ENCODE measurements at regions of chr18 and their contacts with region 1.

Region 1: GRCh38 chr18:74147779-74148542 is at the starts of genes FBXO15 and TIMM21:
- DNase-seq: peak; percentile 90
- ATAC-seq: peak; percentile 95
- H3K4me3 ChIP-seq: peak within 1 kb of the TSS; percentile 85 to 96
- H3K27ac ChIP-seq: peak within 1 kb of the TSS; percentile 86
- H3K4me1 ChIP-seq: peaks cover 6 to 23% of the 10 kb centered on the region in 2 experiments; a peak in 3 of 4 replicates
- H3K27me3 ChIP-seq: peaks cover 8% of the 10 kb centered on the region; the same call in 1 of the 2 replicates
- CTCF ChIP-seq: no peak
- POLR2A ChIP-seq: peak; percentile 80
- RAD21 ChIP-seq: no peak
- total RNA-seq, gene FBXO15: 1.1 TPM
- total RNA-seq, gene TIMM21: 33.3 TPM

Region 2: GRCh38 chr18:74291771-74292540 is 144.0 kb after region 1 on chr18 and contains the start of gene CYB5A:
- CTCF ChIA-PET with region 1: no interaction called
- POLR2A ChIA-PET with region 1: no interaction called
- RAD21 ChIA-PET with region 1: no interaction called
- intact Hi-C with region 1: loop called (anchors 2 kb)
- DNase-seq: peak; percentile 83
- ATAC-seq: peak; percentile 96
- H3K4me3 ChIP-seq: peak within 1 kb of the TSS; percentile 62 to 75
- H3K27ac ChIP-seq: peak within 1 kb of the TSS; percentile 20; the same call in 1 of the 2 replicates
- H3K4me1 ChIP-seq: peaks cover 7 to 19% of the 10 kb centered on the region in 2 experiments; a peak in 3 of 4 replicates
- H3K27me3 ChIP-seq: no peaks in the 10 kb centered on the region
- CTCF ChIP-seq: 0 out of 6 replicates have a peak, but pooled peaks of 1 of the 3 experiments have one; percentile 7
- POLR2A ChIP-seq: no peak
- RAD21 ChIP-seq: no peak
- total RNA-seq, gene CYB5A: 37.7 TPM

Region 3: GRCh38 chr18:74597662-74598349 is 449.8 kb after region 1 on chr18 and contains the start of gene ZNF407:
- CTCF ChIA-PET with region 1: no interaction called
- POLR2A ChIA-PET with region 1: no interaction called
- RAD21 ChIA-PET with region 1: no interaction called
- intact Hi-C with region 1: no loop called
- DNase-seq: peak; percentile 86
- ATAC-seq: peak; percentile 84
- H3K4me3 ChIP-seq: peak within 1 kb of the TSS; percentile 78 to 83
- H3K27ac ChIP-seq: peak within 1 kb of the TSS; percentile 90
- H3K4me1 ChIP-seq: peaks cover 12 to 17% of the 10 kb centered on the region in 2 experiments
- H3K27me3 ChIP-seq: no peaks in the 10 kb centered on the region
- CTCF ChIP-seq: no peak
- POLR2A ChIP-seq: peak; percentile 5
- RAD21 ChIP-seq: no peak
- total RNA-seq, gene ZNF407: 7.6 TPM

Measured in HCT116 (cell line).